OCI-LY7 (cell line): ENCODE measurements at regions of chr10 and their contacts with region 1.

Region 1: DNA sequence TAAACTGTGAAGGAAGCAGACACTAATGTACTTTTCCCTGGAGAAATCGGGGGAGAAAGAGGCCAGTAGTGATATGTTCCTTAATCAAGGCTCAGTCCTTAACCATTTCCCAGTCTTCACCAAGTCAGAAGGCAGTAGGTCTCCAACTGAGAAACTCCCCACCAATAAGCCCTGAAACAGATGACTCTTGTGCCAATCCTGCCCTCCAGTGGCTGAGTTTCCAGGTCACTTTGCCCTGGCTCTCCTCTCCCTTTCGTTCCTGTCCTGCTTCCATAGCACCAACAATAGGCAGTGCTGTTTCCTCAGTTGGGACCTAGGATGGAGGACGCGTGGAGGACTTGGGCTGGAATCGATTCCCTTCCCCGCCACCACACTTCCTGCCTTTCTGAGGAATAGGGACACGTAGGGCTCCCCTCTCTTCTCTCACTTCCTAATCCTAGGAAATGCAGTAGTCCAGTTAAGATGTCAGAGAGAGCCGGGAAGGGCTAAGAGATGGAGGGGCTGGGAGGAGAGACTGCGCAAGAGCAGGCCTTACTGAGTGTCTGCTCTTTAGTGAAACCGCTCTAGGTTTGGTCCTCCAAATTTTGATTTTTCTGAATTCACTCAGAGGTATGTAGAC is 23.4 kb downstream of the ATOH7 start:
- DNase-seq: peak; percentile 70
- H3K4me3 ChIP-seq: no peak overlapping the region
- H3K27ac ChIP-seq: no peak overlapping the region
- H3K4me1 ChIP-seq: peaks cover 18% of the 10 kb centered on the region
- CTCF ChIP-seq: peak; percentile 79

Region 2: DNA sequence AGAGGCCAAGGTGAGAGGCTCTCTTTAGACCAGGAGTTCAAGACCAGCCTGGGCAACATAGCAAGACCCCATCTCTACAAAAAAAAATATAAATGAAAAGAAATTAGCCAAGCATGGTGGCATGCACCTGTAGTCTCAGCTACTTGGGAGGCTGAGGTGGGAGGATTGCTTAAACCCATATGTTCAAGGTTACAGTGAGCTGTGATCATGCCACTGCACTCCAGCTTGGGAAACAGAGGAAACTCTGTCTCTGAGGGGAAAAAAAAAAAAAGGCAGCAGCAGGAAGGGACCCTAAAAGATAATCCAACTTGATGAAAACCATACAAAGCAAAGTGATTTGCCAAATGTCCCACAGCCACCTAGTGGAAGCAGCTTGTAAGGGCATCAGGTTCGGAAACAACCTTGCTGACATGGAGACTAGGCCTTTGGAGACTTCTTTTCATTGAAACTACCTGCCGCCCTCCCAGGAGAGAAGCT is 139.8 kb after region 1 on chr10:
- CTCF ChIA-PET with region 1: no interaction called
- POLR2A ChIA-PET with region 1: no interaction called
- intact Hi-C with region 1: loop called (anchors 1 kb)
- DNase-seq: peak; percentile 67
- H3K4me3 ChIP-seq: no peak overlapping the region
- H3K27ac ChIP-seq: no peak overlapping the region
- H3K4me1 ChIP-seq: no peaks in the 10 kb centered on the region
- CTCF ChIP-seq: peak; percentile 85